Activated CD8-positive, alpha-beta T cell treated with anti-CD3 and anti-CD28 coated beads for 36 hours (primary cell): ENCODE measurements at regions of chr16 and their contacts with region 1.

Region 1: DNA sequence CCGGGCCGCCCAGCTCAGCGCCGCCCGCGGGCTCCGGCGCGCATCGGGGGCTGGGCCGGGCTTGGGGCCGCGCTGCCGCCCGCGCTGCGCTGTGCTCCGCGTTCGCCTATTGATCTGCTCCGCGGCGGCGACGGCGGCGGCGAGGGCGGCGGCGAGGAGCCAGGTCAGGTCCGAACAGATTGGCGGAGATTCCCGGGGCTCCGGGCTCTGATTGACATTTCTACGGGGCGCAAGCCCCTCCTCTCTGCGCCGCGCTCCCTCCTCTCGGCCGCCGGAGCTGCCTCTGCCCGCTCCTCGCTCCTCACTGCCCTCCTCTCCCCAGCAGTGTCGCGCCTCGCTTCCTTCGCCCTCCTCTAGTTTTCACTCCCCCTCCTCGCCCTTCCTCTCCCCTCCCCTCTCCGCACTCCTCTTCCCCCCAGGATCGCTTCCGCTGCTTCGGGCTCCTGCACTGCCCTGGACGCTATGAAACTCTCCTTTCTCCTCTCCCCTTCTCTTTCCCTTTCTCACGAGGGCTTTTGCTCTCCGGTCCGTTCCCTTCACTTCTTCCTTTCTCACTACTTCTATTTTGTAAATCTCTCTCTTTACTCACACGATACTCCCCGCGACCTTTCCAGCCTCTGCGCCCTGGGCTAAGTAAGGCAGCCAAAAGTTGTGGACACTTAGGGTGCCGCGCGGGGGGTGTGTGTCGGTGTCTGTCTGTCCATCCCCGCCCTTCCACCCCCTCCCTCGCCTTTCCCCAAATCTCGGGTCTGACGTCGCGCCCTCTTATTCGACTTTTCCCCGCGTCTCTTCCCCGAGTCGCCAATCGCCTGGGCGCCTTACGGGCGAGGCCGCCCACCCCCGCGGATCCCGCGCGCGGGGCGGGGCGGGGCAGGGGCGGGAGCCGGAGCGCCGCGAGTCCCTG is at the start of gene IRX3:
- DNase-seq: no peak
- ATAC-seq: peak; percentile 36
- H3K4me3 Mint-ChIP-seq: peak within 1 kb of the TSS; percentile 66
- H3K27ac Mint-ChIP-seq: no peak within 1 kb of the TSS
- H3K4me1 Mint-ChIP-seq: peaks cover 24% of the 10 kb centered on the region
- H3K27me3 Mint-ChIP-seq: peaks cover 71% of the 10 kb centered on the region
- CTCF ChIP-seq: no peak
- total RNA-seq, gene IRX3: not detected

Region 2: GRCh38 chr16:54936979-54937670 is 650.8 kb after region 1 on chr16:
- CTCF ChIA-PET with region 1: no interaction called
- POLR2A ChIA-PET with region 1: no interaction called
- intact Hi-C with region 1: loop called (anchors 5 kb)
- DNase-seq: peak; percentile 39
- ATAC-seq: no peak
- H3K4me3 Mint-ChIP-seq: peak overlapping the region; percentile 38
- H3K27ac Mint-ChIP-seq: no peak overlapping the region
- H3K4me1 Mint-ChIP-seq: peaks cover 25% of the 10 kb centered on the region
- H3K27me3 Mint-ChIP-seq: peaks cover 82% of the 10 kb centered on the region
- CTCF ChIP-seq: peak; percentile 58